ENCODE measurements at regions of chr2 and their contacts with region 1.

Region 1: DNA sequence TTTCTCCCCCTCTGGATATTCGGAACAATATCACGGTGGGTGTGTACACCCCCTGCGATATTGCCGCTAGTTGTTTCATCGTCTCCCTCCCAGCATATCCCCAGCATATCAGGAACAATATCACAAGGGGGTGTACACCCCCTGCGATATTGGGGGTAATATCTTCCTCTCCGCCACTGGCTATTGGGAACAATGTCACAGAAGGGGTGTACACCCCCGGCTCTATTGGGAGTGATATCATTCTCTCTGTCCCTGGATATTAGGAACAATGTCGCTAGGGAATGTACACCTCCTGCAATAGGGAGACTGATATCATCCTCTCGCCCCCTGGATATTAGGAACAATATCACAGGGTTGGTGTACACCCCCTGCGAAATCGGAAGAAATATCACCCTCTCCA is 1932.0 kb downstream of the SUCLG1 start:
- DNase-seq: no peak
- H3K4me3 Mint-ChIP-seq: no peak overlapping the region
- H3K27ac Mint-ChIP-seq: no peak overlapping the region
- H3K4me1 Mint-ChIP-seq: no peaks in the 10 kb centered on the region
- H3K27me3 Mint-ChIP-seq: no peaks in the 10 kb centered on the region

Region 2: GRCh38 chr2:82256983-82257632 is 270.0 kb before region 1 on chr2:
- intact Hi-C with region 1: no loop called
- DNase-seq: no peak
- H3K4me3 Mint-ChIP-seq: no peak overlapping the region
- H3K27ac Mint-ChIP-seq: no peak overlapping the region
- H3K4me1 Mint-ChIP-seq: no peaks in the 10 kb centered on the region
- H3K27me3 Mint-ChIP-seq: no peaks in the 10 kb centered on the region

Region 3: GRCh38 chr2:82511864-82512263 is 15.3 kb before region 1 on chr2:
- intact Hi-C with region 1: no loop called
- DNase-seq: no peak
- H3K4me3 Mint-ChIP-seq: no peak overlapping the region
- H3K27ac Mint-ChIP-seq: no peak overlapping the region
- H3K4me1 Mint-ChIP-seq: no peaks in the 10 kb centered on the region
- H3K27me3 Mint-ChIP-seq: no peaks in the 10 kb centered on the region

Region 4: DNA sequence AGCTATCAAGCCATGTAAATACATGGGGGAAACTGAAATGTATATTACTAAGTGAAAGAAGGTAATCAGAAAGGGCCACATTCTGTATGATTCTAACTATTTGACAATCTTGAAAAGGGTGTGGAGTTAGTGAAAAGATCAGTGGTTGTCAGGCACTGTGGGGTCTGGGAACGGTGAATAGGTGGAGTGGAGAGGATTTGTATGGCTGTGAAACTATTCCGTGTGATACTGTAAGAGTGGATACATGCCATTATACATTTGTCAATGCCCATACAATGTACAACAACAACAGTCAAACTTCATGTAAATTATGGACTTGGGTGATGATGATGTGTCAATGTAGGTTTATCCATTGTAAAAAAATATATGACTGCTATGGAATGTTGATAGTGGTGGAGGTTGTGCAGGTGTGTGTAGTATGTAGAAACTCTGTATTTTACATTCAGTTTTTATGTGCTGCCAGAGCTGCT is 815.8 kb after region 1 on chr2:
- intact Hi-C with region 1: loop called (anchors 10 kb)
- DNase-seq: no peak
- H3K4me3 Mint-ChIP-seq: no peak overlapping the region
- H3K27ac Mint-ChIP-seq: no peak overlapping the region
- H3K4me1 Mint-ChIP-seq: no peaks in the 10 kb centered on the region
- H3K27me3 Mint-ChIP-seq: no peaks in the 10 kb centered on the region